ENCODE measurements at regions of chr3 and their contacts with region 1.

Region 1: GRCh38 chr3:166902374-166902773 is 477.7 kb downstream of the ZBBX start:
- DNase-seq: peak; percentile 23
- ATAC-seq: no peak
- H3K4me3 ChIP-seq: no peak overlapping the region
- H3K27ac ChIP-seq: no peak overlapping the region
- H3K4me1 ChIP-seq: no peaks in the 10 kb centered on the region
- H3K27me3 ChIP-seq: no peaks in the 10 kb centered on the region
- CTCF ChIP-seq: peak; percentile 53

Region 2: GRCh38 chr3:166634091-166634746 is 268.2 kb before region 1 on chr3:
- CTCF ChIA-PET with region 1: no interaction called
- POLR2A ChIA-PET with region 1: no interaction called
- intact Hi-C with region 1: no loop called
- DNase-seq: no peak
- ATAC-seq: no peak
- H3K4me3 ChIP-seq: no peak overlapping the region
- H3K27ac ChIP-seq: no peak overlapping the region
- H3K4me1 ChIP-seq: no peaks in the 10 kb centered on the region
- H3K27me3 ChIP-seq: no peaks in the 10 kb centered on the region
- CTCF ChIP-seq: no peak

Region 3: DNA sequence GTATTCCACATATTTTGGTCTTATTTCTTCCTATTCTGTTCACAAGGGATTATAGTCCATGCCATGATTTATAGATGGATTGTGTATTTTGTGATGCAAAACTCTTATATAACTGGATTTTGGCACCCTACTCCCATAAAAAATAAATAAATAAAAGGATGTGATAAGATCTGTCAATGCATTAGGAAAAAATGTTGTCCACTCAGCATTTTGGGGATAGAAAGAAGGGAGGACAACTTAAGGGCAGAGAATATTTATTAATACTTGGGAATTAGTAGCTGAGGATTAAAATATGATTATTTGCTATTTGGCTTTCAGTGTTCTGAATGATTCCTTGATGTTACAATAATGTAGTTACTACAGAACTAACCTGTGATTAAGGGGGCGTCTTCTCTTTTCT is 204.9 kb before region 1 on chr3:
- CTCF ChIA-PET with region 1: no interaction called
- POLR2A ChIA-PET with region 1: no interaction called
- intact Hi-C with region 1: loop called (anchors 10 kb)
- DNase-seq: no peak
- ATAC-seq: no peak
- H3K4me3 ChIP-seq: no peak overlapping the region
- H3K27ac ChIP-seq: no peak overlapping the region
- H3K4me1 ChIP-seq: no peaks in the 10 kb centered on the region
- H3K27me3 ChIP-seq: no peaks in the 10 kb centered on the region
- CTCF ChIP-seq: no peak

Region 4: GRCh38 chr3:166722099-166722498 is 180.3 kb before region 1 on chr3:
- CTCF ChIA-PET with region 1: no interaction called
- POLR2A ChIA-PET with region 1: no interaction called
- intact Hi-C with region 1: loop called (anchors 1 kb)
- DNase-seq: no peak
- ATAC-seq: peak; percentile 42; the same call in 1 of the 2 replicates
- H3K4me3 ChIP-seq: no peak overlapping the region
- H3K27ac ChIP-seq: no peak overlapping the region
- H3K4me1 ChIP-seq: no peaks in the 10 kb centered on the region
- H3K27me3 ChIP-seq: no peaks in the 10 kb centered on the region
- CTCF ChIP-seq: peak; percentile 39; the same call in 1 of the 2 replicates

Region 5: GRCh38 chr3:167151636-167152035 is 249.3 kb after region 1 on chr3:
- CTCF ChIA-PET with region 1: no interaction called
- POLR2A ChIA-PET with region 1: no interaction called
- intact Hi-C with region 1: loop called (anchors 10 kb)
- DNase-seq: no peak
- ATAC-seq: no peak
- H3K4me3 ChIP-seq: no peak overlapping the region
- H3K27ac ChIP-seq: no peak overlapping the region
- H3K4me1 ChIP-seq: no peaks in the 10 kb centered on the region
- H3K27me3 ChIP-seq: no peaks in the 10 kb centered on the region
- CTCF ChIP-seq: no peak